ENCODE measurements at regions of chr15 and their contacts with region 1.

Region 1: DNA sequence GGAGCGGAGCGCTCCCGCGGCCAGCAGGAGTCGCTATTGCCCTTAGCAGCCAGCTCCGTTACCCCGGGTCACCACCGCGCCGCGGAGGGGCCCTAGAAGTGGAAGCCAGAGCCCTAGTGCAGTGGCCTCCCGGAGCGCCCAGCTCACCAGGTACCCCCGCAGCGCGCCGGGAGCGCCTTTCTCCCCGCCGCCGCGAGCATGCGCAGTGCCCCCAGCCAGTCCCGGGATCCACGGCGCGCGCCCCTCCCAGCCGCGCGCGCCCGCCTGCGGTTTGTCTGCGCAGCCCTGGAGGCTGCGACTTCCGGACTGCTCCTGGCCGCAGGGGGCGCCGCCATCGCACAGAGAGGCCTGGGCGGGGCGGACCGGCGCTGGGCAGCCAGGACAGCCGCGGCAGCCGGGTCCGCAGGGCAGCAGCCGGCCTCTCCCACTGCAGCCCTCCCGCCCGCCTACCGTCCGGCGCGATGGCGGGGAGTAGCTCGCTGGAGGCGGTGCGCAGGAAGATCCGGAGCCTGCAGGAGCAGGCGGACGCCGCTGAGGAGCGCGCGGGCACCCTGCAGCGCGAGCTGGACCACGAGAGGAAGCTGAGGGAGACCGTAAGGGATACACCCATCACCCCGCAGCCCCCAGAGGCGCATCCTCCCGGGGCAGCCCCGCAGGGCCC is 5.7 kb downstream of the TPM1 start:
- DNase-seq: peak; percentile 91
- ATAC-seq: peak; percentile 86
- H3K4me3 Mint-ChIP-seq: peak overlapping the region; percentile 84
- H3K27ac Mint-ChIP-seq: no peak overlapping the region
- H3K4me1 Mint-ChIP-seq: peaks cover 18% of the 10 kb centered on the region
- H3K27me3 Mint-ChIP-seq: peaks cover 36% of the 10 kb centered on the region

Region 2: DNA sequence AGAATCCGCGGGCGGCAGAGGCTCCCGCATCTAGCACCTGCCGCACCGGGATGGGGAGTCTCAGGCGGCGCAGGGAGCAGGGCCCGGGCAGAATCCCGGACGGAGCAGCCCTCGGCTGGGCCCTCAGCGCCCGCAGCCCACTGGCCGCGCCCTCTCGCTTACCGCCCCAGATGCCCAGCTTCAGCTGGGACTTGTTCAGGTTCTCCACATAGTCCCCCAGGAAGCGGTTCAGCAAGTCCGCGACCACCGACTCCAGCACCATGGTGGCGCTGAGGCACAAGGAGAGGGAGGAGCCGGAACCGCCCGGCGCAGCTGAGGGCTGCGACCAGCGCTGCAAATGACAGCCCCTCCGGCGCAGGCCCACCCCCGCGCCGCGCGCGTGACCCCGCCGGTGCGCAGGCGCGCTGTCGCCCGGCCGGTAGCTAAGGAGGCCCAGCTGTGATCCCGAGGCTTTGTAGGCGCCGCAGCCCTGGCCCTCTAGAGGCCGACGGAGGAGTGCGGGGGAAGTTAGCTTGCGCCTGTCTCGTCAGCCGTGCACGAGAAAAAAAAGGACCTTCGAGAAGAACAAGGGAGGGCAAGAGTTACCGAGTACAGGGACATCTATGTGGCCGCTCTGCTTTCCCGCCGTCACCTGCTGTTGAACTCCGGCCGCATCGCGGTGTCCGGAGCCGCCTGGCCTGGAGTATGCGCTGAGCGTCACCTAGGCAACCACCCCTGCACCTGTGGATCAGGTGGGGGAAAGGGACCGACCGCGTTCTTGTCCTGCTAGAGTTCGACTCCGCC is 987.9 kb before region 1 on chr15 and contains the start of gene VPS13C:
- CTCF ChIA-PET with region 1: no interaction called
- POLR2A ChIA-PET with region 1: no interaction called
- intact Hi-C with region 1: loop called in 1 of 2 experiments (anchors 5 kb)
- DNase-seq: peak; percentile 94
- ATAC-seq: peak; percentile 90
- H3K4me3 Mint-ChIP-seq: peak within 1 kb of the TSS; percentile 95
- H3K27ac Mint-ChIP-seq: peak within 1 kb of the TSS; percentile 93
- H3K4me1 Mint-ChIP-seq: peaks cover 43% of the 10 kb centered on the region
- H3K27me3 Mint-ChIP-seq: peaks cover 1% of the 10 kb centered on the region
- total RNA-seq, gene VPS13C: 40.1 to 47.2 TPM

Region 3: GRCh38 chr15:63030101-63030551 is 18.1 kb before region 1 on chr15:
- CTCF ChIA-PET with region 1: interaction called, 10 read pairs
- POLR2A ChIA-PET with region 1: no interaction called
- intact Hi-C with region 1: no loop called
- DNase-seq: no peak
- ATAC-seq: no peak
- H3K4me3 Mint-ChIP-seq: no peak overlapping the region
- H3K27ac Mint-ChIP-seq: no peak overlapping the region
- H3K4me1 Mint-ChIP-seq: no peaks in the 10 kb centered on the region
- H3K27me3 Mint-ChIP-seq: peaks cover 20% of the 10 kb centered on the region

Region 4: DNA sequence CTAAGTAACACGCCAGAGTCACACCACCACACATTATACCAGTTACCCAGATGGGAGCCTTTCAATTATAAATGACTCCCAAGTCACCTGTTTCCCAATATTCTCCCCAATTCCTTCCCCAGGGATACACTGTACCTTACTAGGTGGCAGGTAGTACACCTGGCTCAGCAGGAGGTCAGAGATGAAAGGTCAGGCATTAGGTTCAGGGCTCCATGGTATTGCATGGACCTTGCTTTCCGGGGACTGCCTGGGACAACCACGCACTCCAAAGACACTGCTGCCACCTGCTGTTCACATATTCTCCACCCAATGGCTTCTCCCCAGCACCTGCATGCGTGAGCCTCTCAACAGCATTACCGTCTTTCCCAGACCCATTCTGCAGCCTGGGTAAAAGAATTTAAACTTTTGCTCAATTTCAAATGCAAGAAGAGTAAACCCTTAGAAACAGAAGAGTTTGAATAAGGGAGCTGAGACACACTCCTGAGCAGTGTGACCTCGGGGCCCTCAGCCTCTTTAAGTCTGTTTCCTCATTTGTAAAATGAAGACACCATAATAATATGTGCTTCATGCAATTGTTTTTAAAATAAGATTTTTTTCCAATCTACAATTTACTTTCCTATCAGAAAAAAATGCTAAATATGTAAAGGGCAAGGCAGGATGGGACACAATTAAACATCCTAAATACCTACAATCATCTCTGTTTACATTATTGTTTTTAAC is 45.4 kb after region 1 on chr15:
- CTCF ChIA-PET with region 1: interaction called, 61 read pairs
- POLR2A ChIA-PET with region 1: no interaction called
- intact Hi-C with region 1: loop called (anchors 1 kb)
- DNase-seq: peak; percentile 87
- ATAC-seq: peak; percentile 94
- H3K4me3 Mint-ChIP-seq: no peak overlapping the region
- H3K27ac Mint-ChIP-seq: no peak overlapping the region
- H3K4me1 Mint-ChIP-seq: peaks cover 4% of the 10 kb centered on the region
- H3K27me3 Mint-ChIP-seq: no peaks in the 10 kb centered on the region

Region 5: GRCh38 chr15:63188926-63189871 is 141.0 kb after region 1 on chr15 and contains the start of gene RAB8B:
- CTCF ChIA-PET with region 1: interaction called, 4 read pairs
- POLR2A ChIA-PET with region 1: no interaction called
- intact Hi-C with region 1: loop called in 1 of 2 experiments (anchors 1 kb)
- DNase-seq: peak; percentile 100
- ATAC-seq: peak; percentile 76
- H3K4me3 Mint-ChIP-seq: peak within 1 kb of the TSS; percentile 99
- H3K27ac Mint-ChIP-seq: peak within 1 kb of the TSS; percentile 97
- H3K4me1 Mint-ChIP-seq: peaks cover 39% of the 10 kb centered on the region
- H3K27me3 Mint-ChIP-seq: no peaks in the 10 kb centered on the region
- total RNA-seq, gene RAB8B: 147 to 260 TPM

Region 6: GRCh38 chr15:63277038-63277892 is 229.0 kb after region 1 on chr15 and contains the start of gene APH1B:
- CTCF ChIA-PET with region 1: no interaction called
- POLR2A ChIA-PET with region 1: no interaction called
- intact Hi-C with region 1: loop called (anchors 1 to 10 kb)
- DNase-seq: peak; percentile 80
- ATAC-seq: peak; percentile 83
- H3K4me3 Mint-ChIP-seq: peak within 1 kb of the TSS; percentile 78
- H3K27ac Mint-ChIP-seq: peak within 1 kb of the TSS; percentile 88
- H3K4me1 Mint-ChIP-seq: peaks cover 29% of the 10 kb centered on the region
- H3K27me3 Mint-ChIP-seq: no peaks in the 10 kb centered on the region
- total RNA-seq, gene APH1B: 6.5 to 7.8 TPM

Region 7: DNA sequence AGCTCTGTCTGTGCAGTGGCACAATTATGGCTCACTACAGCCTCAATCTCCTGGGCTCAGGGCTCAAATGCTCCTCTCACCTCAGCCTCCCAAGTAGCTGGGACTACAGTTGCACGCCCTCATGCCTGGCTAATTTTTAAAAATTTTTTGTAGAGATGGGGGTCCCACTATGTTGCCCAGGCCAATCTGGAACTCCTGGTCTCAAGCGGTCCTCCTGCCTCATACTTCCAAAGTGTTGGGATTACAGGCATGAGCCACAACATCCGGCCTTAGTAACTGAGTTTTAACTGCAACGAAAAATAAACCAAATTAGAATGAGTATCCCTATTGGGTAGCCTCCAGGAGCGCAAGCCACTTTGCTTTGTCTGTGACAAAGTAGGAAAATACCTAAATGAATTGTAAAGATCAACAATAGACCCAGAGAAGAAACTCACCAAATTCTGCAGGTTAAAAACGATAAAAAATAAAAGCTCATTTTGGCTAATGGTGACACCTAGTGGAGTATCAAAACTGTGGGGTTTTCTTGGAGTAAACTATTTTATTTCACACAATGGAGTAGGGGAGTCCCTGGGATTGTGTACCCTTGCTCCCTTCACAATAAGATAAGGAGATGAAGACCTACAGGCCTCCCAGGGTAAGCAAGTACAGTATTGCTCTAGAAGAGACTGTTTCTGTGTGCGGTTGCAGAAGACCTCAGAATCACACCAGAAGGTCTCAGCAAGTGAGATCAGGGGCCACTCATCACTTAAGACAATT is 354.4 kb after region 1 on chr15:
- CTCF ChIA-PET with region 1: interaction called, 5 read pairs
- POLR2A ChIA-PET with region 1: no interaction called
- intact Hi-C with region 1: loop called (anchors 1 to 5 kb)
- DNase-seq: no peak
- ATAC-seq: peak; percentile 57
- H3K4me3 Mint-ChIP-seq: no peak overlapping the region
- H3K27ac Mint-ChIP-seq: no peak overlapping the region
- H3K4me1 Mint-ChIP-seq: peaks cover 17% of the 10 kb centered on the region
- H3K27me3 Mint-ChIP-seq: peaks cover 6% of the 10 kb centered on the region

Measured in activated CD4-positive, alpha-beta T cell treated with anti-CD3 and anti-CD28 coated beads for 36 hours (primary cell).